ENCODE measurements at regions of chr15 and their contacts with region 1.

Region 1: DNA sequence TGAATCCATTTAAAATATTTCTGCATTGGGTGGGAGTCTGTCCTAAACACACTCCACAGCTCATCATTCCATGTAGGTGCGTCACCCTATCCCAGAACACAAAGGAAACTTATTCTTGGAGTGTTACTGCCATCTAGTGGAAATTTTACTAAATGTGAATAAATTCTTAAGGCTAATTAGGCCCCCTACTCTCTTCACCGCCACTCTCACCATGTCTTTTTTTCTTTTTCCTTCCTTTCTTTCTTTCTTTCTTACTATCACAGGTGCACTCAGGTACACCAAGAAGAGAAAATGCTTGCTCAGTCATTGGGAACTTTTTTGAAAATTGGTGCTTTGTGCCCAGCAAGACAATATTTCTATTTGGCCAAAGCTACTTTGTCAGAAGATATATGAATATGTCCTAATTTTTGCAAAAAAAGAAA is 26.4 kb upstream of the ATP8B4 start:
- DNase-seq: no peak
- H3K4me3 ChIP-seq: peak overlapping the region in 1 of 59 donors; percentile 3
- H3K27ac ChIP-seq: no peak overlapping the region
- H3K27me3 ChIP-seq: no peaks in the 10 kb centered on the region
- CTCF ChIP-seq: peak; percentile 49 to 91 (median 74)

Region 2: DNA sequence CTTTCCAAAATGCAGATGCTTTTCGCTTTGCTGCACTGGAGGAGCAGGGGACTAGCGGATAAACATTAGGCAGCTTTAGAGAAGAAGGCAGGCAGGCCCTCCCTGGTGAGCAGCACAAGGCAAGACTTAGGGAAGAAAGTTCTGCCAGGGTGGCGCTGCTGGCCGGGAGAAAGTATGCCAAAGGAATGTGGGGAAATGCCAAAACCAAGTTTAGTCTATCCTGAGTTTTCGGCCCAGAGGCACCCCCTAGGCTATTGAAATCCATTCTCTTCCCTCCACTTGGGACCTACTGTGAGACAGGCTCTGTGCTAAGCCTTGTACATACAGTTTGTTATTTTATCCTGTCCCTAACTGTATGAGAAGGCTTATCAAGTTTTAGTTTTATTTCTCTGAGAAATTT is 1190.9 kb before region 1 on chr15:
- intact Hi-C with region 1: loop called in 1 of 2 experiments (anchors 10 kb)
- DNase-seq: no peak
- H3K4me3 ChIP-seq: no peak overlapping the region
- H3K27ac ChIP-seq: no peak overlapping the region
- H3K27me3 ChIP-seq: no peaks in the 10 kb centered on the region
- CTCF ChIP-seq: no peak

Region 3: GRCh38 chr15:49428409-49429095 is 716.9 kb before region 1 on chr15:
- intact Hi-C with region 1: loop called in 1 of 2 experiments (anchors 5 kb)
- DNase-seq: no peak
- H3K4me3 ChIP-seq: no peak overlapping the region
- H3K27ac ChIP-seq: no peak overlapping the region
- H3K27me3 ChIP-seq: no peaks in the 10 kb centered on the region
- CTCF ChIP-seq: no peak

Region 4: GRCh38 chr15:49887659-49888322 is 257.7 kb before region 1 on chr15:
- intact Hi-C with region 1: loop called in 1 of 2 experiments (anchors 10 kb)
- DNase-seq: no peak
- H3K4me3 ChIP-seq: no peak overlapping the region
- H3K27ac ChIP-seq: no peak overlapping the region
- H3K27me3 ChIP-seq: no peaks in the 10 kb centered on the region
- CTCF ChIP-seq: no peak